PC-3 (cell line): ENCODE measurements at regions of chr7 and their contacts with region 1.

Region 1: DNA sequence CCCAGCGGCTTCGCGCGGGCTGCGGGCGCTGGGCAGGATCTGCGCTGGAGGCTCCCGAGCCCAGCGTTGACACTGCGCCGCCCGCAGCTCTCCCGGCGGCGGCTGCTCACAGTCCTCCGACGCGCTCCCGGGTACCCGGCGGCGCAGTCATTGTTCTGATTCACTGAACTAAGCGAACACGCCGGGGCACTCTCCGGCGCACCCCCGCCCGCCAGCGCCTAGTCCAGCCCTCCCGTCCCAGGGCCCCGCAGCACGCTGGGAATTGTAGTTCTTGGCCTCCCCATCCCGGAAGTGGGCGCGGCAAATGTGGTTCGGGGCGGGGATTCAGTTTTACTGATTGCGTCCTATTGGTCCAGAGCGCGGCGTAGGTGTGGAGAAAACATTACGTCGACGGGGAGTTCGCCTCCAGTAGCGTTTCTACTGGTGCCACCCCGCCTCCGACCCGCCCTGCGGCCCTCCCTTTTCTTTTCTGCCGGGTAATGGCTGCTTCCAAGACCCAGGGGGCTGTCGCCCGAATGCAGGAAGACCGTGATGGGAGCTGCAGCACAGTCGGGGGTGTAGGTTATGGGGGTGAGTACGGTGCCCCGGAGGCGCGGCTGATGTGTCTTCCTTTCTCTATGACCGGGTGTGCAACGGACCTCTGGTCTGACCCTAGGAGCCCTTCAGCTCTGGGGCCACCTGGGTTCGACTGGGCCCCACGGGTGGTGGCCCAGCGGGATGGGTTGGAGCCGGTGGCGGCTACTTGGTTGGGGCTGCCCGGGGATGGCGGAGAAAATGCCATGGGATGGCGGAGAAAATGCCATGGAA is at the starts of genes DOCK4 and ZNF277:
- DNase-seq: peak; percentile 99
- ATAC-seq: peak; percentile 80
- H3K4me3 ChIP-seq: peak within 1 kb of the TSS; percentile 94
- H3K27ac ChIP-seq: peak within 1 kb of the TSS; percentile 35
- H3K4me1 ChIP-seq: peaks cover 24% of the 10 kb centered on the region
- H3K27me3 ChIP-seq: no peaks in the 10 kb centered on the region
- CTCF ChIP-seq: no peak
- total RNA-seq, gene DOCK4: 21.8 and 25.4 TPM in 2 replicates
- total RNA-seq, gene ZNF277: 8.7 and 14.0 TPM in 2 replicates

Region 2: GRCh38 chr7:111763221-111763801 is 443.1 kb before region 1 on chr7:
- CTCF ChIA-PET with region 1: interaction called, 6 read pairs
- POLR2A ChIA-PET with region 1: no interaction called
- intact Hi-C with region 1: loop called (anchors 1 kb)
- DNase-seq: peak; percentile 55
- ATAC-seq: peak; percentile 84
- H3K4me3 ChIP-seq: no peak overlapping the region
- H3K27ac ChIP-seq: no peak overlapping the region
- H3K4me1 ChIP-seq: peaks cover 6% of the 10 kb centered on the region
- H3K27me3 ChIP-seq: no peaks in the 10 kb centered on the region
- CTCF ChIP-seq: peak; percentile 71

Region 3: DNA sequence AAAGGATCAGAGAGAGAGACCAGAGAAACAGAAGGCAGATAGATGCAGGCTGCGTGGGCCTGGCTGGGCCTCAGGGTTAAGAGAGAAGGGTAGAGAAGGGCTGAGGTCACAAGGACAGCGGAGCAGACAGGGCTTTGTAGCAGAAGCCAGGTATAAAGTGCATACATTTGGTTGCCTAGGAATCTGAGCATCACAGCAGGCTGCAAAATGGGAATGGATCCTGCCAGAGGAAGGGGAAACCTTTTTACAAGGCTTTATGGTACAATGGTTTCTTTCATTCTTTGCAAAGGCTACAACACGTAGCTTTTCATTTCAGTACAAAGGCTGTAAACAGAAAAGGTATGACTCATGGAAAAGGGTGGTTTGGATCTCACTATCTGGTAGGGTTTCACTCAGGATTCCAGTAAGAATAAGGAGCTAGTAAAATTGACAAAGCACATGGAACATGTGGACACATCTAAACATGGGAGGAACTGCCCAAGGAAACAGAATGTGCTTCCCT is 275.4 kb before region 1 on chr7:
- CTCF ChIA-PET with region 1: no interaction called
- POLR2A ChIA-PET with region 1: interaction called, 3 read pairs
- intact Hi-C with region 1: loop called (anchors 1 kb)
- DNase-seq: peak; percentile 90
- ATAC-seq: peak; percentile 93
- H3K4me3 ChIP-seq: no peak overlapping the region
- H3K27ac ChIP-seq: peak overlapping the region; percentile 94
- H3K4me1 ChIP-seq: peaks cover 21% of the 10 kb centered on the region
- H3K27me3 ChIP-seq: no peaks in the 10 kb centered on the region
- CTCF ChIP-seq: no peak

Region 4: DNA sequence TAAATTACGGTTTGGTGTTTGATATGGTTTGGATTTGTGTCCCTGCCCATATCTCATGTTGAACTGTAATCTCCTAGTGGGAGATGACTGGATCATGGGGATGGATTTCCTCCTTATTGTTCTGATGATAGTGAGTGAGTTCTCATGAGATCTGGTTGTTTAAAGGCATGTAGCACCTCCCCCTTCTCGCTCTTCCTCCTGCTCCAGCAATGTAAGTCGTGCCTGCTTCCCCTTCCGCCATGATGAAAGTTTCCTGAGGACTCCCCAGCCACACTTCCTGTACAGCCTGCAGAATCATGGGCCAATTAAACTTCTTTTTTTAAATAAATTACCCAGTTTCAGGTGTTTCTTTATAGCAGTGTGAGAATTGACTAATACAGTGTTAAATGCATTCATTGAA is 116.9 kb before region 1 on chr7:
- CTCF ChIA-PET with region 1: no interaction called
- POLR2A ChIA-PET with region 1: no interaction called
- intact Hi-C with region 1: loop called (anchors 2 kb)
- DNase-seq: no peak
- ATAC-seq: no peak
- H3K4me3 ChIP-seq: no peak overlapping the region
- H3K27ac ChIP-seq: no peak overlapping the region
- H3K4me1 ChIP-seq: peaks cover 27% of the 10 kb centered on the region
- H3K27me3 ChIP-seq: no peaks in the 10 kb centered on the region
- CTCF ChIP-seq: no peak

Region 5: DNA sequence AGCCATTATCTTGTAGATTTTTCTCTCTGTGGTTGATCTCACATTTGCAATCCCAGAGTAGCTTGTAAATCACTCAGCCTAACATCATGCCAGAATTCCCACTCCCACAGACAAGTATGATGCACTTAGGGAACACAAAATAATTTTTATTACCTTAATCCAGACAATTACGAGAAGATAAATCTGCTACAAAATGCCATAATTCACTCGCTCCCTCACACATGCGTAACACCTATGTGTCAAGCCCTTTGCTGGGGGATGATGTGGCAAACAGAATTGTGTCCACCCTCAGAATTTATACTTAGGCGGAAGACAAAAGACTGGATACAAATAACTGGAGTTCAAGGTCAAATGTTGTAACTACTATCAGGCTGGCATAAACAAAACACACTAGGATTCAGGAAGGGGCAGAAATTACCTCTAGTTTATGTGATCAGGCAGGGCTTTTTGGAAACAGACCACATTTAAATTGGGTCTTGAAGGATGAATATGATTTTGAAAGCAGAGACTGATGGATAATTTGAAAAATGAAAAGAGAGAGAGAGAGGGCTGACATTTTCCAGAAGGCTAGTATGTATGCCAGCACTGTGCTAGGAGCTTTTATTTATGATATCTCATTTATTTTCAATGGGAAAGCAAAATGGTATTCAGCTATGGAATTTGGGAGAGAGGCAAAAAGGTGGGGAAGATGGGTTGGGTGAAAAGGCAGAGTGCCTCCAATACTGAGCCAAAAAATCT is 70.0 kb before region 1 on chr7:
- CTCF ChIA-PET with region 1: no interaction called
- POLR2A ChIA-PET with region 1: no interaction called
- intact Hi-C with region 1: loop called (anchors 1 kb)
- DNase-seq: no peak
- ATAC-seq: no peak; the same call in 1 of the 2 replicates
- H3K4me3 ChIP-seq: no peak overlapping the region
- H3K27ac ChIP-seq: peak overlapping the region; percentile 66
- H3K4me1 ChIP-seq: peaks cover 34% of the 10 kb centered on the region
- H3K27me3 ChIP-seq: no peaks in the 10 kb centered on the region
- CTCF ChIP-seq: no peak

Region 6: GRCh38 chr7:112390167-112390566 is 183.7 kb after region 1 on chr7:
- CTCF ChIA-PET with region 1: no interaction called
- POLR2A ChIA-PET with region 1: no interaction called
- intact Hi-C with region 1: loop called (anchors 5 kb)
- DNase-seq: no peak
- ATAC-seq: no peak
- H3K4me3 ChIP-seq: no peak overlapping the region
- H3K27ac ChIP-seq: no peak overlapping the region
- H3K4me1 ChIP-seq: peaks cover 7% of the 10 kb centered on the region; the same call in 1 of the 2 replicates
- H3K27me3 ChIP-seq: no peaks in the 10 kb centered on the region
- CTCF ChIP-seq: no peak

Region 7: DNA sequence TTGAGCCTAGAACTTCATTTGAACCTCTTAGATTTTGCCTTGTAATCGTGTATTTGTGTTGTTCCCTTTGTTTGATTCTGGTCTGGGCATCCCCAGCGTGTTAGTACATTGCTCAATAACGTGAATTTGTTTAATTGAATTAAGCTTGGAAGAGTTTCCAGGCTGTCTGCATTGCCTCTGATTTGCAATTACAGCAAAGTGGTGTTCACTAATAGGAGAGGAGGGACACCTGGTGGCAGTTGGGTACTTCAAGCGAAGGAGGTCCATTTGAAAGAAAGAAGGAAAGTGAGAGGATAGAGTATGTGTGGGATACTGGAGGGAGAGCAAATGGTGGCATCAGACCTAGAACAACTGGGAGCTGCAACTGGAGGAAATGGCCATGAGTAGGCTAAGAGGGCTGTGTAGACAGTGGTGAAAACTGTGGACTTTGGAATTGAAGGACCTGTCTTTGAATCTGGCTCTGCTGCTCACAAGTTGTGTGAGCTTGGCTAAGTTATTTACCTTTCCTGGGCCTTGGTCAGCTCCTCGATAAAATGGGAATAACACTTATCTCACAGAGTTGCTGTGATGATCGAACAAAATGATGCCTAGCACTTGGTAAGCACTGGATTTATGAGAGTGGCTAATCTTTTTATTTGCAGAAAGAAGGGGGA is 289.5 kb after region 1 on chr7:
- CTCF ChIA-PET with region 1: no interaction called
- POLR2A ChIA-PET with region 1: no interaction called
- intact Hi-C with region 1: loop called (anchors 5 kb)
- DNase-seq: peak; percentile 69
- ATAC-seq: peak; percentile 97
- H3K4me3 ChIP-seq: no peak overlapping the region
- H3K27ac ChIP-seq: no peak overlapping the region
- H3K4me1 ChIP-seq: no peaks in the 10 kb centered on the region
- H3K27me3 ChIP-seq: no peaks in the 10 kb centered on the region
- CTCF ChIP-seq: peak; percentile 89